Activated CD4-positive, alpha-beta memory T cell treated with anti-CD3 and anti-CD28 coated beads for 36 hours (primary cell): ENCODE measurements at regions of chr5 and their contacts with region 1.

Region 1: GRCh38 chr5:139392678-139393496 is 2.0 kb downstream of the PROB1 start:
- DNase-seq: peak; percentile 93
- H3K4me3 Mint-ChIP-seq: peak overlapping the region; percentile 93
- H3K27ac Mint-ChIP-seq: peak overlapping the region; percentile 87
- H3K4me1 Mint-ChIP-seq: peaks cover 34% of the 10 kb centered on the region
- H3K27me3 Mint-ChIP-seq: no peaks in the 10 kb centered on the region

Region 2: GRCh38 chr5:139197710-139198669 is 194.9 kb before region 1 on chr5 and contains the start of gene SIL1:
- CTCF ChIA-PET with region 1: no interaction called
- POLR2A ChIA-PET with region 1: no interaction called
- intact Hi-C with region 1: loop called (anchors 5 kb)
- DNase-seq: peak; percentile 99
- H3K4me3 Mint-ChIP-seq: peak within 1 kb of the TSS; percentile 98
- H3K27ac Mint-ChIP-seq: peak within 1 kb of the TSS; percentile 95
- H3K4me1 Mint-ChIP-seq: peaks cover 20% of the 10 kb centered on the region
- H3K27me3 Mint-ChIP-seq: no peaks in the 10 kb centered on the region
- total RNA-seq, gene SIL1: 27.2 to 30.3 TPM

Region 3: GRCh38 chr5:139273572-139274289 is 119.2 kb before region 1 on chr5:
- CTCF ChIA-PET with region 1: interaction called, 4 read pairs
- POLR2A ChIA-PET with region 1: interaction called, 3 read pairs
- intact Hi-C with region 1: loop called (anchors 2 kb)
- DNase-seq: peak; percentile 93
- H3K4me3 Mint-ChIP-seq: peak overlapping the region; percentile 96
- H3K27ac Mint-ChIP-seq: peak overlapping the region; percentile 89
- H3K4me1 Mint-ChIP-seq: peaks cover 60% of the 10 kb centered on the region
- H3K27me3 Mint-ChIP-seq: peaks cover 2% of the 10 kb centered on the region

Region 4: GRCh38 chr5:139293504-139294373 is 99.1 kb before region 1 on chr5 and contains the start of gene MATR3:
- CTCF ChIA-PET with region 1: interaction called, 3 read pairs
- POLR2A ChIA-PET with region 1: interaction called, 9 read pairs
- intact Hi-C with region 1: loop called (anchors 2 kb)
- DNase-seq: peak; percentile 96
- H3K4me3 Mint-ChIP-seq: peak within 1 kb of the TSS; percentile 95
- H3K27ac Mint-ChIP-seq: peak within 1 kb of the TSS; percentile 98
- H3K4me1 Mint-ChIP-seq: peaks cover 31% of the 10 kb centered on the region
- H3K27me3 Mint-ChIP-seq: no peaks in the 10 kb centered on the region
- total RNA-seq, gene MATR3: 163 to 179 TPM

Region 5: GRCh38 chr5:139341650-139342422 is 51.1 kb before region 1 on chr5 and contains the start of gene PAIP2:
- CTCF ChIA-PET with region 1: interaction called, 14 read pairs
- POLR2A ChIA-PET with region 1: interaction called, 32 read pairs
- intact Hi-C with region 1: loop called (anchors 1 kb)
- DNase-seq: peak; percentile 98
- H3K4me3 Mint-ChIP-seq: peak within 1 kb of the TSS; percentile 97
- H3K27ac Mint-ChIP-seq: peak within 1 kb of the TSS; percentile 95
- H3K4me1 Mint-ChIP-seq: peaks cover 46% of the 10 kb centered on the region
- H3K27me3 Mint-ChIP-seq: no peaks in the 10 kb centered on the region
- total RNA-seq, gene PAIP2: 104 to 110 TPM

Region 6: DNA sequence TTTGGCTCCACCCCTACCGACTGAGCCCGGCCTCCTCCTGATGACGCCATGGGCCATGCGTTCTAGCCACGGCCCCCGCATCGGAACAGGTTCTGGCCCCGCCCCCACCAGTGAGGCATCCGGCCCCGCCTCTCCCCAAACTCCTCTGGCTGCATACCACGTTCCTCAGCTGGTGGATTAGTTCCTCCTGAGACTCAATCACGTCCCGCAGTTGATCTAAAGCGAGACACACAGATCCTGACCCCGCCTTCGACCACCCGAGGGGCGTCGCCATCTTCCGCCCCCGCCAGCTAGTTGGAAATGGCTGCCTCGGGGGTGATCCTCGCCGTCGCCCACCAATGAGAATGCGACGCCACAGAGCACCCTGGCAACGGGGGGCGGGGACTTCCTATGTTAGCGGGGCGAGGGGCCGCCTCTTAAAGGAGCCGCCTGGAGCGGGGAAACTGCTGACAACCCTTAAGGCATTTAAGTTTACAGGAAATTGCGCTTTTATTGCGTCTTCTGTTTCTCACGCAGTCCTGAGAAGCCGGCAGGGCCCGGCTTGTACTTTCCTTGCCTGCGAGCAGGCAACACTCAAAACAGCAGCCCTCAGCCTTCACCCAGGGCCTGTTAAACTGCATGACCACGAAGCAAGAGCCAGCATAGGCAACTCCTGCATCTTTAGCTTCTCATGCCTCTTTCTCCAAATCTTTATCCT is 11.0 kb after region 1 on chr5 and contains the start of gene SPATA24:
- CTCF ChIA-PET with region 1: interaction called, 37 read pairs
- POLR2A ChIA-PET with region 1: interaction called, 16 read pairs
- intact Hi-C with region 1: loop called (anchors 1 kb)
- DNase-seq: peak; percentile 100
- H3K4me3 Mint-ChIP-seq: peak within 1 kb of the TSS; percentile 91
- H3K27ac Mint-ChIP-seq: peak within 1 kb of the TSS; percentile 99
- H3K4me1 Mint-ChIP-seq: peaks cover 34% of the 10 kb centered on the region
- H3K27me3 Mint-ChIP-seq: no peaks in the 10 kb centered on the region
- total RNA-seq, gene SPATA24: 3.7 to 5.2 TPM

Region 7: GRCh38 chr5:140020601-140021177 is 627.8 kb after region 1 on chr5:
- CTCF ChIA-PET with region 1: no interaction called
- POLR2A ChIA-PET with region 1: no interaction called
- intact Hi-C with region 1: no loop called
- DNase-seq: no peak
- H3K4me3 Mint-ChIP-seq: no peak overlapping the region
- H3K27ac Mint-ChIP-seq: no peak overlapping the region
- H3K4me1 Mint-ChIP-seq: no peaks in the 10 kb centered on the region
- H3K27me3 Mint-ChIP-seq: peaks cover 10% of the 10 kb centered on the region